Left cardiac atrium (tissue), 4 donors: ENCODE measurements at regions of chr18 and their contacts with region 1.

Region 1: GRCh38 chr18:32158108-32158624 is 31.7 kb upstream of the MEP1B start:
- DNase-seq: peak; percentile 77
- ATAC-seq: peak; percentile 98

Region 2: GRCh38 chr18:32114293-32114942 is 43.7 kb before region 1 on chr18:
- intact Hi-C with region 1: no loop called
- DNase-seq: no peak
- ATAC-seq: no peak

Region 3: DNA sequence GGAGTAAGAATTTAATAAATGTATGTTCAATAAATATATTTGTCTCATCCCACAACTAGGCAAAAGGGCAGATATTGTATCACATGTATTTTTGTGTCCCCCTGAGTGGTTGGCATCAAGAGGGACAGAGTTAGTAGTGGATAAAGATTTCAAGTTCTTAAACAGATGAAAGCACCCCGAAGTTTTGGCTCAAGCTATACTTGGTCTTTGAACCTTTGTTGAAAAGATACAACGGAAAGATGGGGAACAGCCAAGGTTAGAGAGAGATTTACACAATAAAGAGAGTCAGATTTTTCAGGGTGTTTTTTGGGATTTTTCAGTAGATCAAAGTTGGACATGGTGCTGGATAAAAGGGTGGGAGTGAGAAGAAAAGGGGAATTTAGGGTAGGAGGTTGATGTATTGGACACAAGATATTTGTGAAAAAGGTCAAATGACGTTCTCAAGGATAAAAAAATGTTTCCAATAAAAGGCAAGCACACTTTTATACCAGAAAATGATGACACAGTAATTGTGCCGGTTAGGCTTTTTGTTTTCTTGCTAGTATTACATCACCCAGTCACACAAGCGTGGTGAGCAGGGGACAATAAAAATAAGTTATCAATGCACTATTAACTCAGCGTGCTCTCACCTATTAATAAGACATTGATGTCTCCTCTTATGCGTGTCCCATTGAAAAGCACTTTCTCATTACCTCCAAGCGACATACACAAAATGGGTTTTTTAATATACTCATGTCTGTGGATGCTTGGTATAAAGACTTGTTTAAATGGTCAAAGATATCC is 91.2 kb after region 1 on chr18:
- intact Hi-C with region 1: no loop called
- DNase-seq: no peak
- ATAC-seq: no peak

Region 4: DNA sequence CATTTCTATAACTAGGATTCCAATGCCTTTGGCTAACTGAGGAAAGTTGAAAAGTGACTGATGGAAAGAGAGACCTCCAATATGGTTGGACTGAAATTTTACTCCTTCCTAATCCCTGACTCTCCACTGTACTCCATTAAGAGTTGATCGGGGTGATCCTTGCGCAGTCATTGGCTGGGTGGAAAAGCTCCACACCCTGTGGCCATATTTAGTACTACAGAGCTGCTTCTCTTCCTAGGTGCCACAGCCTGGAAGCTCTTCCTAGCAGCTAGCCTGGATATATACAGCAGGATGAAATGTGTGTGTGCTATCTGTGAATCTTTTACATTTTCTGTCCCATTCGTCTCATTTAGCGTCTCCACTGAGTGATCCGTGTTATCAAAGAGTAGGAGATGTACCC is 102.8 kb after region 1 on chr18:
- intact Hi-C with region 1: loop called in 1 of 2 experiments (anchors 10 kb)
- DNase-seq: no peak
- ATAC-seq: no peak

Region 5: DNA sequence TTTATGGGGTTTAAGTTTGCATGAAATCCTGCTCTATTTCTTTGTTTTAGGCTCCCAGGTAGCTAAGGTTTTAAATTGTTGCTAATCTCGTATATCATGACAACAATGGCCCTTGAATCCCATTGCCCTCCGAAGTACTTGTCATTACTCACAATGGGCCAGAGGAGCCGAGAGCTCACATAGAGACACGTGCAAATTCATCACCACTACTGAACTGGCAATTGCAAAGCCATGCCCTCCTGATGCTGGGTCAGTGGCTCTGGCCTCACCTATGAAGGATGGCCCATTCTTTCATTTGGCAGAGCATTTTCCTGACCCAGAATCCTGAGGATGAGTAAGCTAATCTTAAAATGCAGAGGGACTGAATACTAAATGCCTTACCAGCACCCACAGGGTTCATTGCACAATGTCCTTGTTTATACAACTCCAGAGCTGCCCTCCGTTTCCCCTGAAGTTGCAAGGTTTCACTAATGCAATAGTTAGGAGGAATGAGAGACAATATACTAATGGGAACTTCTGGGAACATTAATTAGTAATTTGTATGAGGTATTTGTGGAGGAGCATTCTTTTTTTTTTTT is 384.1 kb after region 1 on chr18:
- intact Hi-C with region 1: loop called in 1 of 2 experiments (anchors 5 kb)
- DNase-seq: no peak
- ATAC-seq: no peak